RWPE1 (cell line): ENCODE measurements at regions of chr14 and their contacts with region 1.

Region 1: DNA sequence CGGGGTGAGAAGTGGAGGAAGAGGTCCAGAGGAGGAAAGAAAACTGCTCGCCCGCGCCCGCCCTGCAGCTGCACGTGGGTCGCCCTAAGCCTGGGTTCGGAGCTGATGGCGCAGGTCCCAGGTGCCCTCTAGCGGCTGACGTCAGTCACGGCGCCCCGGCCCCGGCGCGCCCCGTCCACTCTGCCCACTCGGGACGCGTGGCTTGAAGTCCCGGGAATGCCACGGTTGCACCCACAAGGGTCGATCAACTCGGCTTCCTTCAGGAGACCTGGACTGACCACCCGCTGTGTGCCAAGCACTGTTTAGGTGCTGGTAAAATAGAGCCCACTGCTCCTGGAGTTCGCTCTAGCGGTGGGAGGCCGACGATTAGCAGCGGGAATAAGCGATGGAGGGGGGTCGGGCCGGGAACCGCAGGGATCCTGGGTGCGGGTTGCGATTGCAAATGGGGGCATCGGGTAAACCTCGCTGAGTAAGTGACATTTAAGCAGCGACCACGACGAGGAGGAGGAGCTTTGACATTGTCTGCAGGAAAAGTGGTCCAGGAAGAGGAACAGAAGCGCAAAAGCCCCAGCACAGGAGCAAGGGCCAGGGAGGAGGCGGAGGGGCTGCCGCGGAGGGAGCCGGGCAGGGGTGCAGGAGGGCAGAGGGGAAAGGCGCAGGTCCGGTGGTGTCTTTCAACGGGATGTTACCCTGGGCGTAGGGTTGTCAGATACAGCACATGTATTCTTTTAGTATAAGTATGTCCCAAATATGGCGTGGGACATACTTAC is 5.1 kb upstream of the ZNF839 start:
- DNase-seq: peak; percentile 84
- H3K27ac ChIP-seq: peak overlapping the region; percentile 34
- CTCF ChIP-seq: peak; percentile 97

Region 2: GRCh38 chr14:102234331-102235264 is 79.8 kb before region 1 on chr14:
- CTCF ChIA-PET with region 1: interaction called, 11 read pairs
- POLR2A ChIA-PET with region 1: no interaction called
- DNase-seq: no peak
- H3K27ac ChIP-seq: peak overlapping the region; percentile 10; the same call in 1 of the 2 replicates
- CTCF ChIP-seq: no peak

Region 3: GRCh38 chr14:102394717-102395375 is 80.4 kb after region 1 on chr14:
- CTCF ChIA-PET with region 1: no interaction called
- POLR2A ChIA-PET with region 1: no interaction called
- DNase-seq: no peak
- H3K27ac ChIP-seq: no peak overlapping the region
- CTCF ChIP-seq: no peak